PC-9 (cell line): ENCODE measurements at regions of chr5 and their contacts with region 1.

Region 1: GRCh38 chr5:73591102-73591695 is 25.7 kb downstream of the UTP15 start:
- DNase-seq: peak; percentile 42 to 71
- H3K4me3 ChIP-seq: no peak overlapping the region
- H3K27ac ChIP-seq: no peak overlapping the region
- H3K4me1 ChIP-seq: peaks cover 17% of the 10 kb centered on the region
- H3K27me3 ChIP-seq: no peaks in the 10 kb centered on the region
- CTCF ChIP-seq: peak; percentile 94

Region 2: GRCh38 chr5:73354406-73354805 is 236.8 kb before region 1 on chr5:
- CTCF ChIA-PET with region 1: no interaction called
- POLR2A ChIA-PET with region 1: no interaction called
- intact Hi-C with region 1: no loop called
- DNase-seq: no peak
- H3K4me3 ChIP-seq: no peak overlapping the region
- H3K27ac ChIP-seq: no peak overlapping the region
- H3K4me1 ChIP-seq: no peaks in the 10 kb centered on the region
- H3K27me3 ChIP-seq: no peaks in the 10 kb centered on the region
- CTCF ChIP-seq: no peak

Region 3: GRCh38 chr5:73654171-73654811 is 63.1 kb after region 1 on chr5:
- CTCF ChIA-PET with region 1: no interaction called
- POLR2A ChIA-PET with region 1: interaction called, 4 read pairs
- intact Hi-C with region 1: loop called (anchors 10 kb)
- DNase-seq: peak; percentile 61 to 96
- H3K4me3 ChIP-seq: no peak overlapping the region
- H3K27ac ChIP-seq: peak overlapping the region; percentile 96
- H3K4me1 ChIP-seq: peaks cover 65% of the 10 kb centered on the region
- H3K27me3 ChIP-seq: no peaks in the 10 kb centered on the region
- CTCF ChIP-seq: no peak

Region 4: GRCh38 chr5:73693481-73694061 is 102.4 kb after region 1 on chr5:
- CTCF ChIA-PET with region 1: no interaction called
- POLR2A ChIA-PET with region 1: no interaction called
- intact Hi-C with region 1: loop called (anchors 2 kb)
- DNase-seq: no peak
- H3K4me3 ChIP-seq: no peak overlapping the region
- H3K27ac ChIP-seq: no peak overlapping the region
- H3K4me1 ChIP-seq: peaks cover 35% of the 10 kb centered on the region
- H3K27me3 ChIP-seq: no peaks in the 10 kb centered on the region
- CTCF ChIP-seq: peak; percentile 66

Region 5: GRCh38 chr5:73792687-73793320 is 201.6 kb after region 1 on chr5:
- CTCF ChIA-PET with region 1: interaction called, 7 read pairs
- POLR2A ChIA-PET with region 1: no interaction called
- intact Hi-C with region 1: loop called (anchors 1 kb)
- DNase-seq: peak; percentile 58 to 72
- H3K4me3 ChIP-seq: no peak overlapping the region
- H3K27ac ChIP-seq: no peak overlapping the region
- H3K4me1 ChIP-seq: peaks cover 12% of the 10 kb centered on the region
- H3K27me3 ChIP-seq: no peaks in the 10 kb centered on the region
- CTCF ChIP-seq: peak; percentile 98

Region 6: GRCh38 chr5:73902327-73903051 is 311.3 kb after region 1 on chr5:
- CTCF ChIA-PET with region 1: no interaction called
- POLR2A ChIA-PET with region 1: no interaction called
- intact Hi-C with region 1: loop called (anchors 5 kb)
- DNase-seq: no peak
- H3K4me3 ChIP-seq: no peak overlapping the region
- H3K27ac ChIP-seq: peak overlapping the region; percentile 89
- H3K4me1 ChIP-seq: peaks cover 44% of the 10 kb centered on the region
- H3K27me3 ChIP-seq: no peaks in the 10 kb centered on the region
- CTCF ChIP-seq: peak; percentile 92

Region 7: DNA sequence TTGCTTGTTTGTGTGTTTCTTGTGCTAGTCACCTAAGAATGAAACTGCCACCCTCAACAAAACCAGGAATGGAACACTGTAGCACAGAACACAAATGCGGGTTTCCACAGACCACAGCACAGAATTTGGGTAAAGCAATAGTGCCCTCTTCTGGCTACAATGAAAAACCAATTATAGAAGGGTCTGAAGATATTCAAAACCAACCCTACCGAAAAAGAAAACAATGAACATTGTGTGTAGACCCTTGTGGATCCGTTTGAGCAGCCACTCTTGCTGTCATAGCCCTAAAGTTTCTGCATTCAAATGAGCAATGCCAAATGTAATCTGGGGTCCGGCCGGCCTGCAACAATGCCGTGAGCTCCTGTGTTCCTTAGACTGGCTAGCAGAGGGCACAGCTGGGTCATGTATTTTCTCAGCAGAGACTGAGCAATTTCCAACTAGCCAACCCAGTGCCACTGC is 1057.7 kb after region 1 on chr5:
- CTCF ChIA-PET with region 1: no interaction called
- POLR2A ChIA-PET with region 1: no interaction called
- intact Hi-C with region 1: loop called (anchors 2 kb)
- DNase-seq: peak in 1 of 2 experiments; percentile 57
- H3K4me3 ChIP-seq: no peak overlapping the region
- H3K27ac ChIP-seq: no peak overlapping the region
- H3K4me1 ChIP-seq: peaks cover 23% of the 10 kb centered on the region
- H3K27me3 ChIP-seq: no peaks in the 10 kb centered on the region
- CTCF ChIP-seq: peak; percentile 83